IMR-90 (cell line): ENCODE measurements at regions of chr7 and their contacts with region 1.

Region 1: GRCh38 chr7:107044347-107045194 is at the start of gene PRKAR2B:
- DNase-seq: peak; percentile 64
- ATAC-seq: peak; percentile 97
- H3K4me3 ChIP-seq: peak within 1 kb of the TSS; percentile 93
- H3K27ac ChIP-seq: peak within 1 kb of the TSS; percentile 51
- H3K4me1 ChIP-seq: peaks cover 4% of the 10 kb centered on the region; the same call in 1 of the 2 replicates
- H3K27me3 ChIP-seq: no peaks in the 10 kb centered on the region
- CTCF ChIP-seq: 0 out of 2 replicates have a peak, but pooled peaks have one; percentile 14
- POLR2A ChIP-seq: no peak
- RAD21 ChIP-seq: no peak
- total RNA-seq, gene PRKAR2B: 3.0 and 8.1 TPM in 2 replicates

Region 2: DNA sequence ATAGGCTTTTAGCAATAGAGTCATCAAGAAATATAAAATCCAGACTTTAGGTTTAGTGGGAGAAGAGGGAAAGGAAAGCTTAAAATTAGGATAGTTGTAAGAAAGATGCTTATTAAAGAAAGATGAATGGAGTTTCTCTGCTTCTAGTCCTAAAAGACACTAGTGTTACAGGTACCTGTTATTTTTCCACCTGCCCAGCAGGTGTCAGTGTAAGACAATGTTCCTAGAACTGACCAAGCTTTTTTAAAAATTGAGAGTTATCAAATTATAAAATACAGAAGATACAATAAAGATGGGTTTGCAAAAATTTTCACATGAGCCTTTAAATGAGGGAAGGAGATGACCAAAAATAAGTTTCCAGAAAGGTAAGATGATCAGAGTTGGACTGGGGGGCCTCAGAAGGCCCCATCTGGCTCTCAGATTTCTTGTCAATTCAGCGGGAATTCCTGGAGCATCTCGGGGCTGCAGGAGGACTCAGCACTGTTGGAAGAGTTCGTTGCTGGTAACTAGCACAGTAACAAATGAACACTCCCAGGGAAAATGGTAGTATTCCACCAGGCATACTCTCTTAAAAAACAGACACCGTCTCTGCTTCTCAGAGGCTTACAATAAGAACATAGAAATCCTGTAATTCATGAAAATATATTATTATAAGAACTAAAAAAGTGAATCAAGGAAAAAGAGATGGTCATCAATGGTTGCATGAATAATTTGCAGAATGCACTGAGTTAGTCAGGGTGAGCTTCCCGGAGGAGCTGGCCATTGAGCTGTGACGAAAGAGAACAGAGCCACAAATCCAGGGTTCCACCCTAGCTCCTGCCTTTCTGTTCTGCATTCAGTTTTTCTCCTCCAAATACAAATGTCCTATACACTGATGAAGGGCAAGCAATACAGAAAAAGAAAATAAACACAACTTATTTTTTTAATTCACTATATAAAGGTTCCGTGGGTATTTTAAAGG is 251.3 kb before region 1 on chr7:
- CTCF ChIA-PET with region 1: no interaction called
- POLR2A ChIA-PET with region 1: no interaction called
- dilution Hi-C with region 1: no loop called
- in situ Hi-C with region 1: no loop called
- intact Hi-C with region 1: loop called (anchors 5 kb)
- DNase-seq: peak; percentile 33
- ATAC-seq: peak; percentile 59
- H3K4me3 ChIP-seq: no peak overlapping the region
- H3K27ac ChIP-seq: no peak overlapping the region
- H3K4me1 ChIP-seq: peaks cover 9% of the 10 kb centered on the region; the same call in 1 of the 2 replicates
- H3K27me3 ChIP-seq: no peaks in the 10 kb centered on the region
- CTCF ChIP-seq: peak; percentile 57
- POLR2A ChIP-seq: no peak
- RAD21 ChIP-seq: peak; percentile 72

Region 3: GRCh38 chr7:106952658-106953231 is 91.8 kb before region 1 on chr7:
- CTCF ChIA-PET with region 1: no interaction called
- POLR2A ChIA-PET with region 1: no interaction called
- dilution Hi-C with region 1: no loop called
- in situ Hi-C with region 1: no loop called
- intact Hi-C with region 1: loop called (anchors 5 kb)
- DNase-seq: no peak
- ATAC-seq: peak; percentile 32
- H3K4me3 ChIP-seq: no peak overlapping the region
- H3K27ac ChIP-seq: no peak overlapping the region
- H3K4me1 ChIP-seq: peaks cover 2% of the 10 kb centered on the region; the same call in 1 of the 2 replicates
- H3K27me3 ChIP-seq: peaks cover 10% of the 10 kb centered on the region
- CTCF ChIP-seq: no peak
- POLR2A ChIP-seq: no peak
- RAD21 ChIP-seq: no peak

Region 4: DNA sequence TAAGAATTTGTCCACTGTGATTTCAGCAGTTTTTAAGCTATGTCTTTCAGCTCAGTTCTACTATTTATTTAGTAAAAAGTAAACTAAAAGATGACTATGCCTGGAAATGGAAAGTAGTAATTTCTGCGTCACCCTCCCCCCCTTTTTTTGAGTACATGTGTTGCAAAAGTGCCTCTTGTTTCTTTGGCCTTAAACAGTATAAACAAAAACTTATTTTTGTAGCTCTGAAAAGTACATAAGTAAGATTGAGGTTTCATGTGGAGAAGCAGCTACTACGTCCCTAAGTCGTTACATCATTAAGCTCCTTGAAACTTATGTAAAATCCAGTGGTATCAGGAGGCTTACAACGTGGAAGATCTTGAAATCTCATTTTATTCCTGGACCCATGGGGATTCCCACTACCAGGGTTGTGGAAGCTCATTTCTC is 77.9 kb after region 1 on chr7:
- CTCF ChIA-PET with region 1: interaction called, 4 read pairs
- POLR2A ChIA-PET with region 1: no interaction called
- dilution Hi-C with region 1: no loop called
- in situ Hi-C with region 1: no loop called
- intact Hi-C with region 1: loop called (anchors 5 kb)
- DNase-seq: peak; percentile 85
- ATAC-seq: peak; percentile 86
- H3K4me3 ChIP-seq: no peak overlapping the region
- H3K27ac ChIP-seq: no peak overlapping the region
- H3K4me1 ChIP-seq: peaks cover 11% of the 10 kb centered on the region
- H3K27me3 ChIP-seq: no peaks in the 10 kb centered on the region
- CTCF ChIP-seq: no peak
- POLR2A ChIP-seq: no peak
- RAD21 ChIP-seq: no peak

Region 5: GRCh38 chr7:107150375-107151073 is 106.0 kb after region 1 on chr7:
- CTCF ChIA-PET with region 1: no interaction called
- POLR2A ChIA-PET with region 1: no interaction called
- dilution Hi-C with region 1: no loop called
- in situ Hi-C with region 1: no loop called
- intact Hi-C with region 1: loop called (anchors 2 kb)
- DNase-seq: peak; percentile 78
- ATAC-seq: peak; percentile 58; the same call in 1 of the 2 replicates
- H3K4me3 ChIP-seq: no peak overlapping the region
- H3K27ac ChIP-seq: no peak overlapping the region
- H3K4me1 ChIP-seq: peaks cover 6% of the 10 kb centered on the region
- H3K27me3 ChIP-seq: no peaks in the 10 kb centered on the region
- CTCF ChIP-seq: peak; percentile 74
- POLR2A ChIP-seq: no peak
- RAD21 ChIP-seq: peak; percentile 75